Heart left ventricle (tissue), 16 donors: ENCODE measurements at regions of chr16 and their contacts with region 1.

Region 1: GRCh38 chr16:53773150-53773846 is 69.3 kb downstream of the FTO start:
- DNase-seq: peak in 4 of 5 donors; percentile 21 to 35 (median 26)
- ATAC-seq: peak; percentile 84 to 94 (median 89)
- H3K4me3 ChIP-seq: no peak overlapping the region
- H3K27ac ChIP-seq: peak overlapping the region in 10 of 12 donors; percentile 17 to 66 (median 46)
- H3K4me1 ChIP-seq: peaks cover 0 to 85% (median 37%) of the 10 kb centered on the region in 12 donors
- H3K27me3 ChIP-seq: no peaks in the 10 kb centered on the region
- CTCF ChIP-seq: peak; percentile 38 to 70 (median 60)
- POLR2A ChIP-seq: no peak

Region 2: DNA sequence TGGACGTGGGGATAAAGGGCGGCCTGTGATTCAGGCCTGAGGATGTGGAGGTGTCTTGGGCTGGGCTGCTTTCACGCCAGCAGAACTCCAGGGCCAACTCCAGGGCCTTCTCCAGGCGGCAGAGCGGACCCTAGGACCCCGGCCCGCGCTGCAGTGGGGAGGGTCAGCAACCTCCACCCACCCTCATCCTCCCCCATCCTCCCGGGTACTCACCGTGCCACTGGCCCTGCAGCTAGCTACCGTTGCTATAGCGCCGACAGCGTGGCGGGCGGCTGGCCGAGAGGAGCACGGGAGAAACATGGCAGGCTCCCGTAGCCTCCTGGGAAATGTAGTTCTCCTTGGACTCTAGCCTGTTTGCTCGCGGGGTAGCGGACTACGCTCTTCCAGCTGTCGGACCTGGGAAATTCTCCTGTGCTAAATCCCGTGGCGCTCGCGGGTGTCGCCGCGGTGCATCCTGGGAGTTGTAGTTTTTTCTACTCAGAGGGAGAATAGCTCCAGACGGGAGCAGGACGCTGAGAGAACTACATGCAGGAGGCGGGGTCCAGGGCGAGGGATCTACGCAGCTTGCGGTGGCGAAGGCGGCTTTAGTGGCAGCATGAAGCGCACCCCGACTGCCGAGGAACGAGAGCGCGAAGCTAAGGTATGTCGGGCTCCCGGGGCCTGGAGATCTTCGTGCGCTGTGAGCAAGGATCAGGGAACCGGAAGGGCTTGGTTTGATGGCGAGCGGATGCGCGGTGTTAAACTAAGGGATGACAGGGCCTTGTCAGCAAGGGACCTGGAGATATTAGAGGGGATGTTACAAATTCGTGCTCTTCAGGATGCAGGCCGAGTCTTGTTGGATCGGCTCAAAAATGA is 69.5 kb before region 1 on chr16 and contains the starts of genes FTO and RPGRIP1L:
- intact Hi-C with region 1: loop called in 1 of 10 experiments (anchors 2 kb)
- DNase-seq: peak; percentile 98 to 99 (median 99)
- ATAC-seq: peak; percentile 99 to 100 (median 100)
- H3K4me3 ChIP-seq: peak within 1 kb of the TSS; percentile 65 to 93 (median 76)
- H3K27ac ChIP-seq: peak within 1 kb of the TSS in 11 of 12 donors; percentile 33 to 85 (median 69)
- H3K4me1 ChIP-seq: peaks cover 0 to 24% (median 19%) of the 10 kb centered on the region in 12 donors
- H3K27me3 ChIP-seq: no peaks in the 10 kb centered on the region
- CTCF ChIP-seq: peak in 5 of 12 donors; percentile 8 to 40 (median 17)
- POLR2A ChIP-seq: peak in 1 of 2 donors; percentile 41
- total RNA-seq, gene FTO: 77.2 to 105 (median 87.0) TPM
- total RNA-seq, gene RPGRIP1L: 1.4 to 4.6 (median 2.4) TPM

Region 3: DNA sequence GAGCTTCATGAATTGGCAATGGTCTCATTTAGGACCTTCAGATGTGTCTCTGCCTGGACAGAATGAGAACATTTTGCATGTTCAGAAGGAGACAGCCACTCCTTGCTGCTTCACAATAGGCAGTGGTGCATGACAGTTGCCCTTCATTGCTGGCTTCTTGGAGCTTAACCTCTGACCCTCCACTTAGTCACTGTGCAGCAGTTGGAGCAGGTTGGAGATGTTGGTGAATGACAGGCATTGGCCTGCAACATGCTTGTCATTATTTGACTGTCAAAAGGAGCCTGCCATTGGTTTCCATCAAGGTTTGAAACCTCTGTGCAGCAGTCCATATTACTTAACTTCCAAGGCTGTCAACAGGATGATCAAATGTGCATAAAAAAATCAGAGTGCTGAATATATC is 46.7 kb before region 1 on chr16:
- intact Hi-C with region 1: no loop called
- DNase-seq: no peak
- ATAC-seq: peak in 1 of 4 donors; percentile 53
- H3K4me3 ChIP-seq: no peak overlapping the region
- H3K27ac ChIP-seq: no peak overlapping the region
- H3K4me1 ChIP-seq: peaks cover 0 to 33% (median 15%) of the 10 kb centered on the region in 12 donors
- H3K27me3 ChIP-seq: no peaks in the 10 kb centered on the region
- CTCF ChIP-seq: no peak
- POLR2A ChIP-seq: no peak

Region 4: GRCh38 chr16:53848277-53848942 is 75.1 kb after region 1 on chr16:
- intact Hi-C with region 1: no loop called
- DNase-seq: no peak
- ATAC-seq: no peak
- H3K4me3 ChIP-seq: no peak overlapping the region
- H3K27ac ChIP-seq: no peak overlapping the region
- H3K4me1 ChIP-seq: peaks cover 0 to 20% (median 0%) of the 10 kb centered on the region in 12 donors
- H3K27me3 ChIP-seq: no peaks in the 10 kb centered on the region
- CTCF ChIP-seq: no peak
- POLR2A ChIP-seq: no peak

Region 5: DNA sequence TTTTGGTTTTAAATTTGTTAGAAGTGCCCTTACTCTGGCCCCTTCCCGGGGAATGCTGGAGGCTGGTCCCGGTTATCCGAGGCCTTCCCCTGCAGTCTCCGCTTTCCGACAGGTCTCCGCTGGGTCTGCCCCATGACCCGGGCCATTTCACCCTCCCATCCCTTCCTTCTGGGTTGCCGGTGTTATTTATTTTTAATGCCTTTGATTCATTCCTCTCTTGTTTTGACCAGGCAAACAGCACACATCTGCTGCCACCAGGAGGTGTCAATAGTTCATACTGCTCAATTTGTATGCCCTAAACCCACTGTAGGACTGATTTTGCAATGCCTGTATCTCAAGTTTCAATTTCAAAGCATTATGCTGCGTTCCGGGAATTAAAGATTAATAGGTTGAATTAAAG is 1044.1 kb after region 1 on chr16:
- intact Hi-C with region 1: loop called in 1 of 10 experiments (anchors 10 kb)
- DNase-seq: peak in 2 of 5 donors; percentile 8 to 33
- ATAC-seq: peak in 3 of 4 donors; percentile 47 to 69 (median 69)
- H3K4me3 ChIP-seq: no peak overlapping the region
- H3K27ac ChIP-seq: no peak overlapping the region
- H3K4me1 ChIP-seq: peaks cover 0 to 6% (median 0%) of the 10 kb centered on the region in 12 donors
- H3K27me3 ChIP-seq: peaks cover 0 to 7% (median 0%) of the 10 kb centered on the region in 9 donors
- CTCF ChIP-seq: peak in 9 of 12 donors; percentile 6 to 55 (median 42)
- POLR2A ChIP-seq: no peak

Region 6: GRCh38 chr16:54936979-54937670 is 1163.8 kb after region 1 on chr16:
- intact Hi-C with region 1: loop called in 3 of 10 experiments (anchors 5 to 10 kb)
- DNase-seq: peak in 4 of 5 donors; percentile 48 to 69 (median 62)
- ATAC-seq: peak; percentile 25 to 74 (median 52)
- H3K4me3 ChIP-seq: peak overlapping the region; percentile 15 to 86 (median 72)
- H3K27ac ChIP-seq: peak overlapping the region; percentile 26 to 96 (median 69)
- H3K4me1 ChIP-seq: peaks cover 0 to 45% (median 22%) of the 10 kb centered on the region in 12 donors
- H3K27me3 ChIP-seq: peaks cover 12 to 98% (median 67%) of the 10 kb centered on the region in 9 donors
- CTCF ChIP-seq: peak; percentile 50 to 84 (median 66)
- POLR2A ChIP-seq: no peak

Region 7: DNA sequence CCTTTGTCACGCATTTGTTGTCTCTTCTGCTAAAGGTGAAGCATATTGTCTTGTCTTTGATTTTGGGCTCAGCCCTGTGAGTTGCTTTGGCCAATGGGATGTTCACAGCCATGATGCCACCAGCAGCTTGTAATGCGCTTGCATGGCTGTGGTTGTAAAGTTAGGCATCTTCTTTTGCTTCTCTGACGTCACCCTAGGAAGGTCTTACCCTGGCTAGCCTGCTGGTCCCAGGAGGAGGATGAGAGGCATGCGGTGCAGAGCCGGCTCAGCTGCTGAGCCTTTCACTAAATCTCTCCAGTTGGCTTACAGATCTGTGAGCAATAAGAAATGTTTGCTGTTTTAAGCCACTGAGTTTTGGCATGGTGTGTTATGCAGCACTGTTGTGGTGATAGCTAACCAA is 1591.5 kb after region 1 on chr16:
- intact Hi-C with region 1: loop called in 3 of 10 experiments (anchors 5 to 10 kb)
- DNase-seq: no peak
- ATAC-seq: no peak
- H3K4me3 ChIP-seq: no peak overlapping the region
- H3K27ac ChIP-seq: no peak overlapping the region
- H3K4me1 ChIP-seq: peaks cover 0 to 28% (median 19%) of the 10 kb centered on the region in 12 donors
- H3K27me3 ChIP-seq: peaks cover 0 to 12% (median 0%) of the 10 kb centered on the region in 9 donors
- CTCF ChIP-seq: no peak
- POLR2A ChIP-seq: no peak